Caco-2 (cell line): ENCODE measurements at regions of chr17 and their contacts with region 1.

Region 1: GRCh38 chr17:56499799-56500388 is 93.6 kb upstream of the NOG start:
- DNase-seq: peak in 1 of 2 experiments; percentile 34
- H3K4me3 ChIP-seq: no peak overlapping the region
- H3K4me3 Mint-ChIP-seq: no peak overlapping the region
- H3K27ac Mint-ChIP-seq: no peak overlapping the region
- H3K4me1 ChIP-seq: no peaks in the 10 kb centered on the region
- H3K4me1 Mint-ChIP-seq: no peaks in the 10 kb centered on the region
- H3K27me3 ChIP-seq: no peaks in the 10 kb centered on the region
- H3K27me3 Mint-ChIP-seq: peaks cover 4% of the 10 kb centered on the region
- CTCF ChIP-seq: peak; percentile 28 to 29

Region 2: DNA sequence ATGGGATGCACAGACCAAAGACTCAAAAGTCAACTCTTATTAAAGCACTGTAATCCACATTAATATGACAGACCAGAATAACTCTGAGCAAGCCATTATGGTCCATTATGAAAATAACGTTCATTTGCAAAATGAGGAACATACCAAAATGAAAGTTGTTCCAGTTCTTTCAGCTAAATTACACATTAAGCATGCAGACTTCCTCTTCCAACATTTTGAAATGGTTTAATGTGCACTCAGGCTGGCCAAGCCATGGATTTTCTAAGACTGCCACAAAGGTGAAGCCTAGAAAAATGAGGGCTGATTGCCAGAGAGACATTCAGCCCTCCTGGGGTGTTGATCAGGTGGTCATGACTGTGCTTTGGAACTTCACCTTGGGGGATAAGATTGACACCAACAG is 36.9 kb after region 1 on chr17:
- CTCF ChIA-PET with region 1: no interaction called
- POLR2A ChIA-PET with region 1: no interaction called
- intact Hi-C with region 1: loop called (anchors 1 kb)
- DNase-seq: no peak
- H3K4me3 ChIP-seq: no peak overlapping the region
- H3K4me3 Mint-ChIP-seq: no peak overlapping the region
- H3K27ac Mint-ChIP-seq: no peak overlapping the region
- H3K4me1 ChIP-seq: no peaks in the 10 kb centered on the region
- H3K4me1 Mint-ChIP-seq: no peaks in the 10 kb centered on the region
- H3K27me3 ChIP-seq: no peaks in the 10 kb centered on the region
- H3K27me3 Mint-ChIP-seq: peaks cover 16% of the 10 kb centered on the region
- CTCF ChIP-seq: no peak